G401 (cell line): ENCODE measurements at regions of chr1 and their contacts with region 1.

Region 1: DNA sequence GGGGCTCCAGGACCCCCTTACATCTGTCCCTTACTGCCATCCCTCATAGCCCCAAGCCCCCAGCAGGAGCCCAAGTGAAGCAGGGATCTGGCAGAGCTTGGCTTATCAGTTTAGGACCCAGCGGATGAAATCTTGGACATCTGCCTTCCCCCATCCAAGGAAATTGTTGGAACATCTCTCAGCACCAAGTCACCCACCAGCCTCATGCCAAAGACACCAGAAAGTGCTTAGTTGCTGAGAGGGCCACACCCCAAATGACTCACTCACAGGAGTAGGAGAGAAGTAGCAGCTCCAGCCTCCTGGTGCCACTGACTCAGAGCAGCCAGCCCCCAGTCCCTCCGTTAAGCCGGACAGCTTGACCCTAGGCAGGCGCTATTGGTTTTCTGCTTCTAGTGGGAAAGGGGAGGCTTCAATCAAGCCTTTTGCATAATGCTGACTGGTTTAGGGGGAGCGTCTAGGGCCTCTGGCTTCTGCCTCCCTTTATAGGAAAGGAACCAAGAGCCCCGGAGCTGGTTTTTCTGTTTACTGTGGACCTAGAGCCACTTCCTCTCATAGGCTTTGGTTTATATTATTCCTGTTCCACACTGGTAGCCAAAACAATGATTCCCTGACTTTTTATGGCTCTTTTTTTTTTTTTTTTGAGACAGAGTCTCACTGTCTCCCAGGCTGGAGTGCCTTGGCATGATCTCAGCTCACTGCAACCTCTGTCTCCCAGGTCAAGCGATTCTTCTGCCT is 114.2 kb upstream of the IPO9 start:
- DNase-seq: no peak

Region 2: GRCh38 chr1:201750939-201751338 is 36.2 kb after region 1 on chr1:
- in situ Hi-C with region 1: loop called (anchors 5 kb)
- DNase-seq: no peak